PC-9 (cell line): ENCODE measurements at regions of chr10 and their contacts with region 1.

Region 1: DNA sequence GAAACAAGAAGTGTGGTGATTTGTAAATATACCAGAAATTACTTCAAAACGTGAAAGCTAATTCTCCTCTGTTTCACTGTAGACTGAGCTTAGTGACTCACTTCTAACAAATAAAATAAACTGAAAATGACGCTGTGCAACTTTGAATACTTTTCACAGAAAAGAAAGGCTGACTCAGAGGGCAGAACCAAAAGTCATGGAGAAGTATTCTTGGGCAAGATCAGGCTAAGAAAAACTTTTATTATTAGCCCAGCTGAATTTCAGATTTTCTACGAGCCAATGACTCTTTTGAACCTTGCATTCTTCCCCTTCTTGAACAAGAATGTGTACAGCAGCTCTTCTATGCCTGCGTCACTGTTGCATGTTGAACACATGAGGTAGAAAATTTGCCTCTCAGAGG is 527.3 kb upstream of the GHITM start:
- DNase-seq: no peak
- H3K4me3 ChIP-seq: no peak overlapping the region
- H3K27ac ChIP-seq: no peak overlapping the region
- H3K4me1 ChIP-seq: no peaks in the 10 kb centered on the region
- H3K27me3 ChIP-seq: no peaks in the 10 kb centered on the region
- CTCF ChIP-seq: no peak

Region 2: GRCh38 chr10:83166372-83166771 is 445.7 kb before region 1 on chr10:
- CTCF ChIA-PET with region 1: interaction called, 10 read pairs
- POLR2A ChIA-PET with region 1: no interaction called
- intact Hi-C with region 1: no loop called
- DNase-seq: no peak
- H3K4me3 ChIP-seq: no peak overlapping the region
- H3K27ac ChIP-seq: no peak overlapping the region
- H3K4me1 ChIP-seq: no peaks in the 10 kb centered on the region
- H3K27me3 ChIP-seq: no peaks in the 10 kb centered on the region
- CTCF ChIP-seq: peak; percentile 30; the same call in 1 of the 2 replicates